Prostate gland (tissue), 2 donors: ENCODE measurements at regions of chr12 and their contacts with region 1.

Region 1: GRCh38 chr12:949453-950191 is at the start of gene RAD52:
- DNase-seq: peak; percentile 97
- H3K4me3 ChIP-seq: peak within 1 kb of the TSS; percentile 76 to 78
- H3K27ac ChIP-seq: peak within 1 kb of the TSS; percentile 84 to 91
- H3K4me1 ChIP-seq: no peaks in the 10 kb centered on the region
- H3K27me3 ChIP-seq: no peaks in the 10 kb centered on the region
- CTCF ChIP-seq: peak; percentile 98 to 99 (median 99)
- POLR2A ChIP-seq: peak; percentile 63
- total RNA-seq, gene RAD52: 16.7 to 30.5 TPM

Region 2: GRCh38 chr12:674272-674781 is 275.3 kb before region 1 on chr12:
- intact Hi-C with region 1: no loop called
- DNase-seq: no peak
- H3K4me3 ChIP-seq: no peak overlapping the region
- H3K27ac ChIP-seq: no peak overlapping the region
- H3K4me1 ChIP-seq: no peaks in the 10 kb centered on the region
- H3K27me3 ChIP-seq: no peaks in the 10 kb centered on the region
- CTCF ChIP-seq: no peak
- POLR2A ChIP-seq: no peak

Region 3: DNA sequence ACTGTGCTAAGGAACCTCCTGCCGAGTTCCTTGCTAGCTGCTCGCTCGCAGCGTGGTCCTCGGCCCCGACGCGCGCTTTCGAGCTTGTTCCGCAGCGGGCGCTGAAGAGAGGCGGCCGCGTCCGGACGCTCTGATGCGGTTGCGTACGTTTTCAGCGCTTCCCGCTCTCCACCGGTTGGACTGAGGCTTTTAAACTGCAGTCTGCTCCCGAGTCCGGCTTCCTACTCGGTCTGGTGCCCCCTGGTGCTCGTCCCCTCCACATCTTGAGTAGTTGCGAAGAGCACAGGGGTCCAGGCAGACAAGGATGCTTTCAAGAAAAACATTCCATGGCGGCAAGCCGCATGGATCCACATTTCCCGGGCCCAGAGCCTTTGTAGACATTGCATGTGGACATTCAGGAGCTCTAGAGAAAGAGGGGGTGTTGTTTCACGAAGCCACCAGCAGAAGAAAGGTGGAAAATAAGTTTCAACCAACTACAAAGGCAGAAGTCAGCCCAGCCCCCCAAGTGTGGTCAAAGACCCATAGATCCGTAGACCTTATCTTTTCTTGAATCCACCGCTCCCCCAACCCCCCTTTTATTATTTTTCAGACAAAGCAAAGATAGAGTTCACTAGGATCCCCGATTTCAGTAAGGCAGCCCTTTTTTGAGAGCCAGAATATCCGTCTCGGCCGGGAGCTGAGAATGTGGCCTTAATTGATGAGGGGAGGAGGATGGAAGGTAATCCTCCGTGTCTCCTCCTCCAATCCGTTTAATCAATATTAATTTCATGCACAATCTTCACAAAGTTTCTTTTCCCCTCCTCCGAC is 198.2 kb before region 1 on chr12:
- intact Hi-C with region 1: loop called (anchors 2 kb)
- DNase-seq: peak; percentile 85
- H3K4me3 ChIP-seq: peak overlapping the region; percentile 92 to 96
- H3K27ac ChIP-seq: peak overlapping the region; percentile 99
- H3K4me1 ChIP-seq: peaks cover 11% of the 10 kb centered on the region
- H3K27me3 ChIP-seq: no peaks in the 10 kb centered on the region
- CTCF ChIP-seq: peak; percentile 38 to 76 (median 74)
- POLR2A ChIP-seq: peak; percentile 54

Region 4: DNA sequence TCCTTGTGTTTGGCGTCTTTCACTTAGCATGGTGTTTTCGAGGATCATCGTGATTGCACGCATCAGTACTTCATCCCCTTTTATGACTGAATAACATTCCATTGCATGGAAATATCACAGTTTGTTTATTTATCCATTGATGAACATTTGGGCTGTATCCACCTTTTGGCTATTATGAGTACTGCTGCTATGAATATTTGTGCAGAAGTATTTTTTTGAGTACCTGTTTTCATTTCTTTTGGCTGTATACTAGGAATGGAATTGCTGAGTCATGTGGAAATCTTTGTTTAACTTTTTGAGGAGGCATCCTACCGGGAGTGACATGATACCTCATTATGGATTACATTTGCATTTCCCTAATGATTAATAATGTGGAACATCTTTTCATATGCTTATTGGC is 130.9 kb before region 1 on chr12:
- intact Hi-C with region 1: loop called (anchors 5 kb)
- DNase-seq: no peak
- H3K4me3 ChIP-seq: no peak overlapping the region
- H3K27ac ChIP-seq: peak overlapping the region in 1 of 2 donors; percentile 28
- H3K4me1 ChIP-seq: no peaks in the 10 kb centered on the region
- H3K27me3 ChIP-seq: no peaks in the 10 kb centered on the region
- CTCF ChIP-seq: peak in 1 of 4 experiments; percentile 11
- POLR2A ChIP-seq: no peak

Region 5: DNA sequence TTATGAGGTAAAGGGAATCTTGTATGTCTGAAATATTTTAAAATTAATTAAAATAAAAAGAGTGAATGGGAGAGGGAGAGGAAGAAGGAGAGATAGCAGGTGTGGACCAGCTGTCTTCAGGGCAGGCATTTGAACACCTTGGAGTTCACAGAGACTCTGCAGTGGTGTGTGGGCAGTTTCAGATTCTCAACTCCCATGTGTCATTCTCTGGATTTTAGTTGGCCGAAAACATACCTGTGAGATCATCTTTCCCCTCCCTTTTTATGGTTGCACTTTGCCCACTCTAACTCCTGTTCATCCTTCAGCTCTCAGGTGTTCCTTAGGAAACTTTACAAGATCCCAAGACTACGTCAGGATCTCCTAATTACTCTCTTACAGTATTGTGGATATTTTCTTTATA is 149.5 kb after region 1 on chr12:
- intact Hi-C with region 1: loop called (anchors 5 kb)
- DNase-seq: no peak
- H3K4me3 ChIP-seq: no peak overlapping the region
- H3K27ac ChIP-seq: no peak overlapping the region
- H3K4me1 ChIP-seq: no peaks in the 10 kb centered on the region
- H3K27me3 ChIP-seq: no peaks in the 10 kb centered on the region
- CTCF ChIP-seq: no peak
- POLR2A ChIP-seq: no peak